ENCODE measurements at regions of chr4 and their contacts with region 1.

Region 1: GRCh38 chr4:15001869-15002658 is at the start of gene CPEB2:
- DNase-seq: peak; percentile 97
- ATAC-seq: peak; percentile 62
- H3K4me3 ChIP-seq: peak within 1 kb of the TSS; percentile 82 to 99 (median 94)
- H3K4me3 Mint-ChIP-seq: peak within 1 kb of the TSS; percentile 93
- H3K27ac ChIP-seq: peak within 1 kb of the TSS; percentile 100
- H3K27ac Mint-ChIP-seq: peak within 1 kb of the TSS; percentile 98
- H3K4me1 ChIP-seq: peaks cover 10 to 12% of the 10 kb centered on the region in 2 donors
- H3K4me1 Mint-ChIP-seq: peaks cover 21% of the 10 kb centered on the region
- H3K27me3 ChIP-seq: no peaks in the 10 kb centered on the region
- H3K27me3 Mint-ChIP-seq: no peaks in the 10 kb centered on the region
- CTCF ChIP-seq: no peak
- total RNA-seq, gene CPEB2: 17.6 and 18.0 TPM in 2 replicates

Region 2: GRCh38 chr4:13627606-13628301 is 1374.3 kb before region 1 on chr4 and contains the start of gene BOD1L1:
- CTCF ChIA-PET with region 1: no interaction called
- POLR2A ChIA-PET with region 1: no interaction called
- intact Hi-C with region 1: loop called (anchors 1 kb)
- DNase-seq: peak; percentile 94
- ATAC-seq: peak; percentile 89
- H3K4me3 ChIP-seq: peak within 1 kb of the TSS; percentile 76 to 99 (median 88)
- H3K4me3 Mint-ChIP-seq: peak within 1 kb of the TSS; percentile 92
- H3K27ac ChIP-seq: peak within 1 kb of the TSS; percentile 97 to 98
- H3K27ac Mint-ChIP-seq: peak within 1 kb of the TSS; percentile 95
- H3K4me1 ChIP-seq: peaks cover 34% of the 10 kb centered on the region in 2 donors
- H3K4me1 Mint-ChIP-seq: peaks cover 52% of the 10 kb centered on the region
- H3K27me3 ChIP-seq: no peaks in the 10 kb centered on the region
- H3K27me3 Mint-ChIP-seq: no peaks in the 10 kb centered on the region
- CTCF ChIP-seq: peak; percentile 54
- total RNA-seq, gene BOD1L1: 107 and 109 TPM in 2 replicates

Region 3: GRCh38 chr4:14168919-14169318 is 833.1 kb before region 1 on chr4:
- CTCF ChIA-PET with region 1: no interaction called
- POLR2A ChIA-PET with region 1: no interaction called
- intact Hi-C with region 1: loop called (anchors 10 kb)
- DNase-seq: no peak
- ATAC-seq: no peak
- H3K4me3 ChIP-seq: no peak overlapping the region
- H3K4me3 Mint-ChIP-seq: no peak overlapping the region
- H3K27ac ChIP-seq: no peak overlapping the region
- H3K27ac Mint-ChIP-seq: no peak overlapping the region
- H3K4me1 ChIP-seq: peaks cover 18 to 25% of the 10 kb centered on the region in 2 donors
- H3K4me1 Mint-ChIP-seq: peaks cover 27% of the 10 kb centered on the region
- H3K27me3 ChIP-seq: no peaks in the 10 kb centered on the region
- H3K27me3 Mint-ChIP-seq: no peaks in the 10 kb centered on the region
- CTCF ChIP-seq: no peak

Region 4: GRCh38 chr4:15031993-15032675 is 30.1 kb after region 1 on chr4:
- CTCF ChIA-PET with region 1: no interaction called
- POLR2A ChIA-PET with region 1: no interaction called
- intact Hi-C with region 1: no loop called
- DNase-seq: no peak
- ATAC-seq: no peak
- H3K4me3 ChIP-seq: no peak overlapping the region
- H3K4me3 Mint-ChIP-seq: no peak overlapping the region
- H3K27ac ChIP-seq: no peak overlapping the region
- H3K27ac Mint-ChIP-seq: no peak overlapping the region
- H3K4me1 ChIP-seq: no peaks in the 10 kb centered on the region
- H3K4me1 Mint-ChIP-seq: peaks cover 5% of the 10 kb centered on the region
- H3K27me3 ChIP-seq: no peaks in the 10 kb centered on the region
- H3K27me3 Mint-ChIP-seq: no peaks in the 10 kb centered on the region
- CTCF ChIP-seq: no peak

Region 5: GRCh38 chr4:15118292-15118691 is 116.2 kb after region 1 on chr4:
- CTCF ChIA-PET with region 1: no interaction called
- POLR2A ChIA-PET with region 1: no interaction called
- intact Hi-C with region 1: no loop called
- DNase-seq: no peak
- ATAC-seq: no peak
- H3K4me3 ChIP-seq: no peak overlapping the region
- H3K4me3 Mint-ChIP-seq: no peak overlapping the region
- H3K27ac ChIP-seq: no peak overlapping the region
- H3K27ac Mint-ChIP-seq: no peak overlapping the region
- H3K4me1 ChIP-seq: no peaks in the 10 kb centered on the region
- H3K4me1 Mint-ChIP-seq: no peaks in the 10 kb centered on the region
- H3K27me3 ChIP-seq: no peaks in the 10 kb centered on the region
- H3K27me3 Mint-ChIP-seq: peaks cover 8% of the 10 kb centered on the region
- CTCF ChIP-seq: no peak

Region 6: GRCh38 chr4:15410750-15411149 is 408.7 kb after region 1 on chr4:
- CTCF ChIA-PET with region 1: no interaction called
- POLR2A ChIA-PET with region 1: no interaction called
- intact Hi-C with region 1: loop called (anchors 5 kb)
- DNase-seq: peak; percentile 57
- ATAC-seq: peak; percentile 63
- H3K4me3 ChIP-seq: peak overlapping the region in 4 of 5 experiments; percentile 34 to 42 (median 39)
- H3K4me3 Mint-ChIP-seq: peak overlapping the region; percentile 81
- H3K27ac ChIP-seq: peak overlapping the region; percentile 61 to 63
- H3K27ac Mint-ChIP-seq: peak overlapping the region; percentile 81
- H3K4me1 ChIP-seq: peaks cover 62 to 63% of the 10 kb centered on the region in 2 donors
- H3K4me1 Mint-ChIP-seq: peaks cover 69% of the 10 kb centered on the region
- H3K27me3 ChIP-seq: no peaks in the 10 kb centered on the region
- H3K27me3 Mint-ChIP-seq: no peaks in the 10 kb centered on the region
- CTCF ChIP-seq: no peak

Region 7: DNA sequence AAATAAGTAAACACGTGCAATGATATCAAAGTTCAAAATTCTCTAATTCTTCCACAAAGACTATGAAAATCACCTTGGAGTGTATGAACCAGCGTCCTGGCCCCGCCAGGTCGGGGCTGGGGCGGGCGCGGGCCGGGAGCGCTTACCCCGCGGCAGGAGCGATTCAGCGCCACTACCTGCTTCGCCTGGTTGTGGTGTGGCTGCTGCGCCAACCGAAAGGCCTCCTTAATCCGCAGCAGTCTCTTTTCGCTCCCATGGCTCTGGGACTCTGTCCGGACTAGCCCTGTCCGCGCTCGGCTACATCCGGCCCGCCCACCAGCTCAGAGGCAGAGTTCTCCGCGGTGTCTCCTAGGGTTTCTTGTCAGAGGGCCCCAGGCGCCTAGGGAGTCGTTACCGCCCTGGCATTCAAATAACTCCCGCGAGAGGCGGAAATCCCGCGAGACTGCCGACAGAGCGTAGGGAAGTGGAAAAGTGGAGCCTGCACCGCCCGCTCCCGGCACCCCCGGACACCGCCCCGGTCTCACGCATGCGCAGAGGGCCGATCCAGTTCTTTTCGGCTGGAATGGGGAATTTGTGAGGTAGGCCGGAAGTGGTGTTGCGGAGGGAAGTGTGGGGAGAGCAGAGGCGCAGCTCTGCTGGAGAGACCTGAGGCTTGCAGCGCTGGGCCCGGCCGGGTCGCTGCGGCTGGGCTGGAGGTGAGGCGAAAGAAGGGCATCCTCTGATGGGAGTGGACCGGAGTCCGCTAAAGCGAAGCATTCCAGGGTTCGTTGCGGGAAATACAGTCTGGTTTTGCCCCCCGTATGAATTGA is 679.3 kb after region 1 on chr4 and contains the start of gene FAM200B:
- CTCF ChIA-PET with region 1: no interaction called
- POLR2A ChIA-PET with region 1: no interaction called
- intact Hi-C with region 1: loop called (anchors 1 kb)
- DNase-seq: peak; percentile 96
- ATAC-seq: peak; percentile 98
- H3K4me3 ChIP-seq: peak within 1 kb of the TSS; percentile 83 to 99 (median 89)
- H3K4me3 Mint-ChIP-seq: peak within 1 kb of the TSS; percentile 95
- H3K27ac ChIP-seq: peak within 1 kb of the TSS; percentile 68 to 80
- H3K27ac Mint-ChIP-seq: peak within 1 kb of the TSS; percentile 89
- H3K4me1 ChIP-seq: peaks cover 8 to 16% of the 10 kb centered on the region in 2 donors
- H3K4me1 Mint-ChIP-seq: peaks cover 22% of the 10 kb centered on the region
- H3K27me3 ChIP-seq: no peaks in the 10 kb centered on the region
- H3K27me3 Mint-ChIP-seq: no peaks in the 10 kb centered on the region
- CTCF ChIP-seq: no peak
- total RNA-seq, gene FAM200B: 11.0 and 12.1 TPM in 2 replicates

Measured in B cell (primary cell).